ENCODE measurements at regions of chr16 and their contacts with region 1.

Region 1: GRCh38 chr16:35841632-35842031 is 2382.2 kb downstream of the TP53TG3F start:
- DNase-seq: no peak
- CTCF ChIP-seq: no peak

Region 2: GRCh38 chr16:35744716-35745115 is 96.9 kb before region 1 on chr16:
- in situ Hi-C with region 1: loop called (anchors 25 kb)
- DNase-seq: no peak
- CTCF ChIP-seq: no peak